ENCODE measurements at regions of chr3 and their contacts with region 1.

Region 1: GRCh38 chr3:108153451-108153981 is 62.7 kb upstream of the CD47 start:
- DNase-seq: peak; percentile 50

Region 2: GRCh38 chr3:108050990-108051389 is 102.5 kb before region 1 on chr3:
- CTCF ChIA-PET with region 1: no interaction called
- POLR2A ChIA-PET with region 1: no interaction called
- DNase-seq: no peak

Region 3: DNA sequence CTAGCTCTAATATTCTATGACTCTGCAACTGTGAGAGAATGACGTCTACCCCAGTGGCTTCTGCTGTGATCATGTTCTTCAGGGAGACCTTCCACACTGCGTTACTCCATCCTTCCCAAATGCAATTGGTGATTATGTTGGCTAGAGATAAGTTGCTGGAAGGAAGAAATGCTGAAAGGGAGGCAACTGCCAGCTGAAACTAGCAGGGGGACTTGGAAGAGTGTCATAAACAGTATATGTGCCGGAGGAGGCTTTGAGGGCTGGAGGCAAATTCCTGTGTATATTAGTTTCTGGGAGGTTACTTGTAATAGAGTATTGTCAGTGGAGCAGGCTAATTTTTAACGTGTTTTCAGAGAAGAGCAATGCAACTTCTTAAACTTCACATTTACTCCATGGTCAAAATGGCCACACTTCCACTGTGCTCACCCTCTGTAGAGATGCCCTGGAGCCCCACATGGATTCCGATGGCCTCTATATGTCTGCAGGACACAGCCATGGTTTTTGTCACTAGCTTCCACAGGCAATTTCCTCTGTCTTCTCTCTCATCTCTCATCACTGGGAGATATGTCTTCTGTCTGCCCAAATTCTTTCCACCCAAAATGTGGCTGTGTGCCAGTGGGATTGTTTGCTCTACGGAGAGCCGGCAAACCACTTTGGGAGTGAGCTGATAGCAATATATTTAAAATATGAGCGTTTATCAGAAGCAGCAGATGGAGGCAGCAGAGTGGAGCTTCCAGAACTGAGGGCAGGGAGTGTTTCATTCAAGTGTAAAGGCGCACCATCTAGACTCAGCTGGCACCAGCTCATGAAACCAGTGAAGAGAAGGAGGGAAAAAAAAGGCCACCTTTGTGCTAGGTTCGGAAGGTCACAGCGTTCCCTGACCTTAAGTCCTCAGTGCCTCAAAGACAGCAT is 49.4 kb before region 1 on chr3:
- CTCF ChIA-PET with region 1: no interaction called
- POLR2A ChIA-PET with region 1: no interaction called
- DNase-seq: no peak

Region 4: GRCh38 chr3:108164391-108164790 is 10.9 kb after region 1 on chr3:
- CTCF ChIA-PET with region 1: no interaction called
- POLR2A ChIA-PET with region 1: no interaction called
- DNase-seq: no peak

Region 5: DNA sequence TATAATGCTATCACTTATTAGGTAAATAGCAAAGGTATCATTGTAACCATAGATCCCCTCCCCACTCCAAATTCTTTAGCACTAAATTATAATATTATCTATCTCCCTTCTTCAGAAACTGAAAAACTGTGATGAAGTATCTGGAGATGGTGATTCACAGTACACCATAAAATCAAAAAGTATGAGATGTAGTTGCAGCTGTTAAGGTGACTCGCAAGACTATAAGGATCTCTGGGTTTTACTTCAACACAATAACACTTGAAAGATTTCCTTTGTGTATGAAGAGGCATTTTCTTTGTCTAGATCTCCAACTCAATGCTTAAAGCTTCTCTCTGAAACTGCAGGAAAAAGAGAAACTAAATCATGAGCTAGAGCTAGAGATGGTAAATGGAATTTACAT is 21.8 kb after region 1 on chr3:
- CTCF ChIA-PET with region 1: no interaction called
- POLR2A ChIA-PET with region 1: no interaction called
- DNase-seq: no peak

Region 6: GRCh38 chr3:108477511-108478147 is 324.1 kb after region 1 on chr3:
- CTCF ChIA-PET with region 1: interaction called, 18 read pairs
- POLR2A ChIA-PET with region 1: no interaction called
- DNase-seq: peak; percentile 67

Measured in HEK293T (cell line).